ENCODE measurements at regions of chr9 and their contacts with region 1.

Region 1: GRCh38 chr9:35553670-35554543 is 51.2 kb upstream of the TESK1 start:
- DNase-seq: peak; percentile 76
- H3K4me3 ChIP-seq: no peak overlapping the region
- H3K27ac ChIP-seq: peak overlapping the region; percentile 24
- H3K4me1 ChIP-seq: peaks cover 6% of the 10 kb centered on the region
- H3K27me3 ChIP-seq: no peaks in the 10 kb centered on the region
- CTCF ChIP-seq: peak; percentile 76 to 79
- POLR2A ChIP-seq: no peak

Region 2: GRCh38 chr9:35161713-35162604 is 391.9 kb before region 1 on chr9 and contains the start of gene UNC13B:
- CTCF ChIA-PET with region 1: interaction called, 13 read pairs
- POLR2A ChIA-PET with region 1: no interaction called
- dilution Hi-C with region 1: no loop called
- intact Hi-C with region 1: no loop called
- DNase-seq: peak; percentile 96
- H3K4me3 ChIP-seq: peak within 1 kb of the TSS; percentile 86 to 95 (median 94)
- H3K27ac ChIP-seq: peak within 1 kb of the TSS; percentile 70
- H3K4me1 ChIP-seq: peaks cover 34% of the 10 kb centered on the region
- H3K27me3 ChIP-seq: no peaks in the 10 kb centered on the region
- CTCF ChIP-seq: no peak
- POLR2A ChIP-seq: peak; percentile 96
- total RNA-seq, gene UNC13B: 44.2 and 46.2 TPM in 2 replicates

Region 3: GRCh38 chr9:35385042-35385441 is 168.9 kb before region 1 on chr9:
- CTCF ChIA-PET with region 1: interaction called, 12 read pairs
- POLR2A ChIA-PET with region 1: no interaction called
- dilution Hi-C with region 1: no loop called
- intact Hi-C with region 1: no loop called
- DNase-seq: peak; percentile 52
- H3K4me3 ChIP-seq: no peak overlapping the region
- H3K27ac ChIP-seq: no peak overlapping the region
- H3K4me1 ChIP-seq: no peaks in the 10 kb centered on the region
- H3K27me3 ChIP-seq: no peaks in the 10 kb centered on the region
- CTCF ChIP-seq: peak; percentile 10 to 48
- POLR2A ChIP-seq: no peak

Region 4: GRCh38 chr9:35481347-35481975 is 72.4 kb before region 1 on chr9:
- CTCF ChIA-PET with region 1: interaction called, 233 read pairs
- POLR2A ChIA-PET with region 1: no interaction called
- dilution Hi-C with region 1: no loop called
- intact Hi-C with region 1: loop called (anchors 1 kb)
- DNase-seq: peak; percentile 71
- H3K4me3 ChIP-seq: no peak overlapping the region
- H3K27ac ChIP-seq: no peak overlapping the region
- H3K4me1 ChIP-seq: peaks cover 5% of the 10 kb centered on the region
- H3K27me3 ChIP-seq: no peaks in the 10 kb centered on the region
- CTCF ChIP-seq: peak; percentile 75 to 80
- POLR2A ChIP-seq: no peak

Region 5: DNA sequence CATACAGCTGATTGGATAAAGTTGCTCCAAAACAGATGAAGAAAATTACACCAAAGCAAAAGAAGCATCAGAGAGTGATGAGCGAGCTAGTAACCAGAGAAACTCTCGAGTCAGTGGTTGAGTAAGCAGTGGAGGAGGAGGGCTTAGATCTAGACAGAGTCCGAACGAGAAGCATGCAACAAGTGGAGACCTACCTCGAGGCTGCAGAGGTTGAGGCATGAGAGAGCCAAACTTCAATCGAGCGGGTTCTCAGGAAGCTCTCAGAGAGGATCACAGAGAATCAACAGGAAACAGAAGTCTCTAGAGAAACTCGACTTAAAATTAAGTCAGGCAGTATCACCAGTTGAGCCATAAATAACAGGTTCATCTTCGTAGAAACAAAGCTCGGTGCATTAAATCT is 57.9 kb before region 1 on chr9:
- CTCF ChIA-PET with region 1: interaction called, 13 read pairs
- POLR2A ChIA-PET with region 1: interaction called, 3 read pairs
- dilution Hi-C with region 1: no loop called
- intact Hi-C with region 1: no loop called
- DNase-seq: no peak
- H3K4me3 ChIP-seq: no peak overlapping the region
- H3K27ac ChIP-seq: no peak overlapping the region
- H3K4me1 ChIP-seq: peaks cover 18% of the 10 kb centered on the region
- H3K27me3 ChIP-seq: no peaks in the 10 kb centered on the region
- CTCF ChIP-seq: no peak
- POLR2A ChIP-seq: no peak

Region 6: GRCh38 chr9:35518226-35518821 is 35.6 kb before region 1 on chr9:
- CTCF ChIA-PET with region 1: interaction called, 83 read pairs
- POLR2A ChIA-PET with region 1: interaction called, 6 read pairs
- dilution Hi-C with region 1: no loop called
- intact Hi-C with region 1: loop called (anchors 2 kb)
- DNase-seq: peak; percentile 80
- H3K4me3 ChIP-seq: no peak overlapping the region
- H3K27ac ChIP-seq: peak overlapping the region; percentile 99
- H3K4me1 ChIP-seq: peaks cover 60% of the 10 kb centered on the region
- H3K27me3 ChIP-seq: no peaks in the 10 kb centered on the region
- CTCF ChIP-seq: no peak
- POLR2A ChIP-seq: peak; percentile 59

Region 7: GRCh38 chr9:35538361-35539234 is 15.3 kb before region 1 on chr9:
- CTCF ChIA-PET with region 1: interaction called, 63 read pairs
- POLR2A ChIA-PET with region 1: interaction called, 3 read pairs
- dilution Hi-C with region 1: no loop called
- intact Hi-C with region 1: no loop called
- DNase-seq: peak; percentile 83
- H3K4me3 ChIP-seq: peak overlapping the region in 2 of 3 experiments; percentile 28 to 52
- H3K27ac ChIP-seq: peak overlapping the region; percentile 77
- H3K4me1 ChIP-seq: peaks cover 30% of the 10 kb centered on the region
- H3K27me3 ChIP-seq: no peaks in the 10 kb centered on the region
- CTCF ChIP-seq: no peak
- POLR2A ChIP-seq: peak; percentile 42

Region 8: DNA sequence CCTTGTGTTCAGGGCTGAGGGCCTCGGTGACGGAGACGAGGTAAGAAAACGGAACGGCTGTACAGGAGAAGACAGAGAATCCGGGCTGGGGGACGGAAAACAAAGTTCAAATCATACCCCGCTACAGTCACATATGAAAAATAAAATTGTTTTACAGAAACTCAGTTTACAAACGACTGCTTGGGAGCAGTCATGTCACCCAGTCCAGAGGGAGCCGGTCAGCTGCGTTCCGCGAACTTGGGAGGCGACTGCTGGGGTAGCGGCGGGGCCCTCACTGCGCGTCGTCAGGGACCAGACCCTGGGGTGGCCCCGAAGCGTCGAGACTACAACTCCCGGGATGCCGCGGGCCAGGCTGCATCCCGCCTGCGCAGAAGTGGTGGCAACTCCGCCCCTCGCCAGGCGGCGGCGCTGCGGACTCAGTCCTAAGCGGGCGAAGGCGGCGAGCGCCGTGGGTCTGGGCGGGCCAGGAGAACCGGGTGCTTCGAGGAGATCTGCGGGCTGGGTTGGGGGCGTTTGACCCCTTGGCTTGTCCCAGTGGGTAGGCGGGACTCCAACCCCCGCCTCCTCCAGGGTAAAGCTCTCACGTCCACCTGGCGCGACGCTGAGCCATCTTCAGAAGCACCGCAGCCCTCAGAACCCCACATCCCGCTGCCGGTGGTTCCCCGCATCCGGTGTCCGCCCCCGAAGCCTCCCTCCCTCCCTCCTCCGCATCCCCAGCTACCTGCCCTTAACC is 92.8 kb after region 1 on chr9:
- CTCF ChIA-PET with region 1: no interaction called
- POLR2A ChIA-PET with region 1: no interaction called
- dilution Hi-C with region 1: no loop called
- intact Hi-C with region 1: no loop called
- DNase-seq: peak; percentile 91
- H3K4me3 ChIP-seq: peak overlapping the region; percentile 39 to 80 (median 47)
- H3K27ac ChIP-seq: peak overlapping the region; percentile 24
- H3K4me1 ChIP-seq: peaks cover 6% of the 10 kb centered on the region
- H3K27me3 ChIP-seq: peaks cover 0 to 2% of the 10 kb centered on the region in 2 experiments
- CTCF ChIP-seq: peak; percentile 91 to 98
- POLR2A ChIP-seq: peak; percentile 27

Measured in endothelial cell of umbilical vein (primary cell).